ENCODE measurements at regions of chr14 and their contacts with region 1.

Region 1: GRCh38 chr14:69818757-69819191 is 21.7 kb upstream of the SLC10A1 start:
- DNase-seq: peak; percentile 29
- H3K4me3 ChIP-seq: no peak overlapping the region
- H3K27ac ChIP-seq: no peak overlapping the region
- H3K27me3 ChIP-seq: peaks cover 2% of the 10 kb centered on the region
- CTCF ChIP-seq: peak; percentile 85

Region 2: DNA sequence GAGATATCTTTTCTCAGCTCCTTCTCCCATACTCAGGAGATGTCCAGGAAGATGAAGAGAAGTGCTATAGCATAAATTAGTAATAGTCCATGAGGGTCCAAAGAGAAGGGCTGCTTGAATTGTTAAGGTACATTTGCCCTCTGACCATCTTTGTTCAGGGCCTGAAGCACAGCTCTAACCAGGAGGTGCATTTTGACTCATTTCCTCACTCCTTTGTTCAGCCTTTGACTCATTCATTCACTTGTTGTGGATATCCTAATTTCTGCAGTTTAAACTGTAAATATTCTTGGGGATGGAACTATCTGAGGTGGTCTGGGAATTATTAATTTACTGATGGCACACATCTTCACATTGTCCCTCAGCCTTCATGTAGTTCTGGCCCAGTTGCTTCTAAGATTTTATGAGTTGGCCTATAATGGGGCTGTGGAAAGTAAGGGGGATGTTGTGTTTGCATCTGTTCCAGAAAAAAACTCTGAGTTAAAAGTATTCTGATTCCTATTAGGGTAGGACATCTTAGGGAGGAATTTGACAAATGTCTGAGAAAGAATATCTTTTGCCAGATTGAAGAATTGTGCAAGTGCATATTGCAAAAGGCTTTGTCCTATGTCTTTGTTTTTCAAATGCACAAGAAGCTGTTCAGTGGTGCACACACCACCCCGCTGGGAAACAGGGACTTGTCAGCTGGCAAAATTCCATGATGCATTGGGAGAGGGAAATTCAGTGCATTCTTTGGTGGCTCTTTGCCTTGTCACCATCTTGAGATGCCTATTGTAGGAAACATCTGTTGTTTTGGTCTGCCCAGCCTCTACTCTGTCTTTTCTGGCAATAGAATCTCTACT is 82.6 kb after region 1 on chr14:
- CTCF ChIA-PET with region 1: no interaction called
- POLR2A ChIA-PET with region 1: no interaction called
- DNase-seq: no peak
- H3K4me3 ChIP-seq: no peak overlapping the region
- H3K27ac ChIP-seq: no peak overlapping the region
- H3K27me3 ChIP-seq: no peaks in the 10 kb centered on the region
- CTCF ChIP-seq: no peak

Region 3: GRCh38 chr14:70013269-70013873 is 194.6 kb after region 1 on chr14:
- CTCF ChIA-PET with region 1: interaction called, 10 read pairs
- POLR2A ChIA-PET with region 1: no interaction called
- DNase-seq: no peak
- H3K4me3 ChIP-seq: no peak overlapping the region
- H3K27ac ChIP-seq: no peak overlapping the region
- H3K27me3 ChIP-seq: no peaks in the 10 kb centered on the region
- CTCF ChIP-seq: peak; percentile 75

Region 4: GRCh38 chr14:70027785-70028428 is 209.1 kb after region 1 on chr14:
- CTCF ChIA-PET with region 1: interaction called, 142 read pairs
- POLR2A ChIA-PET with region 1: interaction called, 3 read pairs
- DNase-seq: no peak
- H3K4me3 ChIP-seq: no peak overlapping the region
- H3K27ac ChIP-seq: no peak overlapping the region
- H3K27me3 ChIP-seq: no peaks in the 10 kb centered on the region
- CTCF ChIP-seq: peak; percentile 96

Region 5: DNA sequence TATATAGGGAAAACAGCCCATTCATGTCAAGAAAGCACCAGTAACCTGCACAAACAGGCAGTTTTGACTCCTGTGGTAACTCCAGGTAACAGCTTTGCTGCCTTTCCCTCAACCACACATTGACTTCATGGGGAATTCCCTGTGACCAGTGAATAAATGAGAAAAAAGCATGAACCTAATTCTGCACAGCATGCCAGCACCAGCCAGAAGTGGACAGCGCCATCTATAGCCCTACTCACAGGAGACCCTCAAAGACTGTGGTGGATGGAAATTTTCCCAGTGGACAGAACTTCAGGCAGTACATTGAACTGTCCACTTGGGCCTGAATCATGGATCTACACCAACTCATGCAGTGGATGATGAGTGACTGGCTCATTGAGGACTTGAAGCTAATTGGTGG is 217.9 kb after region 1 on chr14:
- CTCF ChIA-PET with region 1: interaction called, 17 read pairs
- POLR2A ChIA-PET with region 1: no interaction called
- DNase-seq: no peak
- H3K4me3 ChIP-seq: no peak overlapping the region
- H3K27ac ChIP-seq: no peak overlapping the region
- H3K27me3 ChIP-seq: no peaks in the 10 kb centered on the region
- CTCF ChIP-seq: 0 out of 2 replicates have a peak, but pooled peaks have one; percentile 6

Region 6: DNA sequence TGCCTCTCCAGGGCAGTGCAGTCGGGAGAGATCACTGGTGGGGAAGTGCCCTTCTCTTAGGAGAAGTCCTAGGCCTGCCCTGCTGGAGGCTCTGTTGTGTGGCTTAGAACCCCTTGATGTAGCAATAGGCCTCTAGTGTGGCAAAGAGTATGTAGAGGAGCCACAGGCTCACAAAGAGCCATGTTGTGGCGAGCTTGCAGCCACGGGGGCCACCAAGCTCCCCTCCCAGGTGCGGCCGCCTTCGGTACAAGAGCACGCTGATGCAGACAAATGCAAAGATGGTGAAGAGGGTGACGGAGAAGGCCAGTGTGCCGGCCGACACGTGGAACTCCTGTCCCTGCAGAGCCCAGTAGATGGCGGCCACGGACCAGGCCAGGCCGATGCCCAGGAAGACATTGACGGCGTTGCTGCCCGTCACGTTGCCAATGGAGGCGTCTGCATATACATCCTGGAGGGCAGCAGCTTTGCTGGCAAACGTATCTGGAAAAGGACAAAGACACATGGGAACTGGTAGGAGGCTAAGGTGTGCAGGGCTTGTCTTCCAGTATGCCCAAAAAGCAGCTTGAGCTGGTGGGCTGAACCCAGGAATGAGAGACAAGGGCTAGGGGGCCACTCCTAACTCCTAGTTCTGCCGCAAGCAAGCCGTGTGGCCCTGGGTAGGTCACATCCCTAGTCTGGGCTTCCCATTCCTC is 227.2 kb after region 1 on chr14:
- CTCF ChIA-PET with region 1: interaction called, 10 read pairs
- POLR2A ChIA-PET with region 1: no interaction called
- DNase-seq: peak; percentile 13
- H3K4me3 ChIP-seq: no peak overlapping the region
- H3K27ac ChIP-seq: no peak overlapping the region
- H3K27me3 ChIP-seq: peaks cover 21% of the 10 kb centered on the region
- CTCF ChIP-seq: peak; percentile 68

Region 7: GRCh38 chr14:70073924-70074566 is 255.3 kb after region 1 on chr14:
- CTCF ChIA-PET with region 1: interaction called, 78 read pairs
- POLR2A ChIA-PET with region 1: interaction called, 3 read pairs
- DNase-seq: peak; percentile 24
- H3K4me3 ChIP-seq: no peak overlapping the region
- H3K27ac ChIP-seq: no peak overlapping the region
- H3K27me3 ChIP-seq: peaks cover 10% of the 10 kb centered on the region
- CTCF ChIP-seq: peak; percentile 89

Region 8: GRCh38 chr14:70696026-70696425 is 877.3 kb after region 1 on chr14:
- CTCF ChIA-PET with region 1: interaction called, 11 read pairs
- POLR2A ChIA-PET with region 1: no interaction called
- DNase-seq: no peak
- H3K4me3 ChIP-seq: no peak overlapping the region
- H3K27ac ChIP-seq: no peak overlapping the region
- H3K27me3 ChIP-seq: no peaks in the 10 kb centered on the region
- CTCF ChIP-seq: no peak

Measured in AG04450 (cell line).